ENCODE measurements at regions of chr18 and their contacts with region 1.

Region 1: DNA sequence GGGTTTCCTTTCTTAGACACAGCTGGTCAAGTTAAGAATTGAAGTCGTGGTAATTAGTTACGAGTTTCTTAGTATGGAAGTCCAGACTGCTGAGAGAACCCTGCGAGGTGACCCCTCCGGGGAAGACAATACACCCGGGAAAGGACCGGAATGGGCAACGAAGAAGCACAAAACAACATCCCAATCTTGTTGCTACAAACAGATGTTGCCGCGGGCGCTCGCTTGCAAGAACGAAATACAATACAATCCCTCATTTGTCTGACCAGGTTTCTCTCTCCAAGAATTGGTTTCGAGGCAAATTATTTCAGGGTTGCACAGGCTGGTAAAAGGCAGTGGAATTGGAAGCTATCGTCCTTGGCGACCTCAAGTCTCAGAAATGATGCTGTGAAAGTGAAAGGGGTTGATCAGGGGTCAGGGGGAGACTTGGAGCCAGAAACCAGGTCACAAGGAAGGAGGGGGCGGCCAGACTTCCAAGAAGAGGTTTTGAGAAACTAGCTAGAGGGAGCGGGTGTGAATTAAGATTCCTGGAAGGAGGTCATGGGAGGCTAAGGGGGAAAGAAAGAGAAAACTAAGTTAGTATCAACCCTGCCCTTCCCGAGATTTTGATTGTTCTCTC is 401.9 kb downstream of the HRH4 start:
- DNase-seq: peak; percentile 63
- H3K4me3 ChIP-seq: peak overlapping the region in 1 of 3 experiments; percentile 29
- H3K27ac ChIP-seq: peak overlapping the region; percentile 89
- H3K4me1 ChIP-seq: peaks cover 32% of the 10 kb centered on the region
- H3K27me3 ChIP-seq: no peaks in the 10 kb centered on the region
- CTCF ChIP-seq: no peak
- POLR2A ChIP-seq: no peak

Region 2: GRCh38 chr18:23943104-23943503 is 919.2 kb before region 1 on chr18:
- CTCF ChIA-PET with region 1: no interaction called
- POLR2A ChIA-PET with region 1: no interaction called
- dilution Hi-C with region 1: no loop called
- intact Hi-C with region 1: no loop called
- DNase-seq: no peak
- H3K4me3 ChIP-seq: no peak overlapping the region
- H3K27ac ChIP-seq: no peak overlapping the region
- H3K4me1 ChIP-seq: no peaks in the 10 kb centered on the region
- H3K27me3 ChIP-seq: no peaks in the 10 kb centered on the region
- CTCF ChIP-seq: no peak
- POLR2A ChIP-seq: no peak

Region 3: GRCh38 chr18:24616653-24617052 is 245.7 kb before region 1 on chr18:
- CTCF ChIA-PET with region 1: no interaction called
- POLR2A ChIA-PET with region 1: no interaction called
- dilution Hi-C with region 1: no loop called
- intact Hi-C with region 1: no loop called
- DNase-seq: no peak
- H3K4me3 ChIP-seq: no peak overlapping the region
- H3K27ac ChIP-seq: no peak overlapping the region
- H3K4me1 ChIP-seq: no peaks in the 10 kb centered on the region
- H3K27me3 ChIP-seq: peaks cover 0 to 6% of the 10 kb centered on the region in 2 experiments
- CTCF ChIP-seq: no peak
- POLR2A ChIP-seq: no peak

Region 4: GRCh38 chr18:24726727-24727492 is 135.4 kb before region 1 on chr18:
- CTCF ChIA-PET with region 1: interaction called, 3 read pairs
- POLR2A ChIA-PET with region 1: no interaction called
- dilution Hi-C with region 1: no loop called
- intact Hi-C with region 1: loop called (anchors 5 kb)
- DNase-seq: peak; percentile 77
- H3K4me3 ChIP-seq: peak overlapping the region in 1 of 3 experiments; percentile 10
- H3K27ac ChIP-seq: no peak overlapping the region
- H3K4me1 ChIP-seq: no peaks in the 10 kb centered on the region
- H3K27me3 ChIP-seq: peaks cover 18 to 21% of the 10 kb centered on the region in 2 experiments
- CTCF ChIP-seq: peak; percentile 77 to 87
- POLR2A ChIP-seq: no peak

Region 5: DNA sequence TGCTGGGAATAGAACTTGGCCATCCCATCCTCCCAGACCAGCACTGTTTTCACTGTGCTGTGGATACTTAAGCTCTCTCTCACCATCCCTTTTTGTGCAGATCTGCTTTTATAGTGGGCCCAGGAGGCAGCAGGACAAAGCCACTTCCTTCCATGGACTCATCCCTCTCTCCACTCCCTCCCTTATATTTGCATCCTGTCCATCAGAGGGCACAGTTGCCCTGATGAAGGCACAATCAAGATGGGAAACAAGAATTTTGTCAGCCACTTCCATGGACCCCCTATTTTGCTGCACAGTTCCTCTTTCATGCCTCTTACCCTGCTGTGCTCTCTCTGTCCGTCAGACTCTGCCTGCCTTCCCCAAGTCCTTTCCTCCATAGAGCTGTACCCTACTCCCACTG is 63.1 kb before region 1 on chr18:
- CTCF ChIA-PET with region 1: no interaction called
- POLR2A ChIA-PET with region 1: no interaction called
- dilution Hi-C with region 1: no loop called
- intact Hi-C with region 1: loop called (anchors 5 kb)
- DNase-seq: peak; percentile 20
- H3K4me3 ChIP-seq: no peak overlapping the region
- H3K27ac ChIP-seq: no peak overlapping the region
- H3K4me1 ChIP-seq: no peaks in the 10 kb centered on the region
- H3K27me3 ChIP-seq: peaks cover 3 to 5% of the 10 kb centered on the region in 2 experiments
- CTCF ChIP-seq: peak; percentile 8 to 11
- POLR2A ChIP-seq: no peak

Region 6: GRCh38 chr18:24831871-24832665 is 30.2 kb before region 1 on chr18:
- CTCF ChIA-PET with region 1: interaction called, 5 read pairs
- POLR2A ChIA-PET with region 1: interaction called, 8 read pairs
- dilution Hi-C with region 1: no loop called
- intact Hi-C with region 1: loop called (anchors 1 kb)
- DNase-seq: peak; percentile 98
- H3K4me3 ChIP-seq: no peak overlapping the region
- H3K27ac ChIP-seq: peak overlapping the region; percentile 93
- H3K4me1 ChIP-seq: peaks cover 37% of the 10 kb centered on the region
- H3K27me3 ChIP-seq: peaks cover 0 to 2% of the 10 kb centered on the region in 2 experiments
- CTCF ChIP-seq: no peak
- POLR2A ChIP-seq: peak; percentile 96

Region 7: DNA sequence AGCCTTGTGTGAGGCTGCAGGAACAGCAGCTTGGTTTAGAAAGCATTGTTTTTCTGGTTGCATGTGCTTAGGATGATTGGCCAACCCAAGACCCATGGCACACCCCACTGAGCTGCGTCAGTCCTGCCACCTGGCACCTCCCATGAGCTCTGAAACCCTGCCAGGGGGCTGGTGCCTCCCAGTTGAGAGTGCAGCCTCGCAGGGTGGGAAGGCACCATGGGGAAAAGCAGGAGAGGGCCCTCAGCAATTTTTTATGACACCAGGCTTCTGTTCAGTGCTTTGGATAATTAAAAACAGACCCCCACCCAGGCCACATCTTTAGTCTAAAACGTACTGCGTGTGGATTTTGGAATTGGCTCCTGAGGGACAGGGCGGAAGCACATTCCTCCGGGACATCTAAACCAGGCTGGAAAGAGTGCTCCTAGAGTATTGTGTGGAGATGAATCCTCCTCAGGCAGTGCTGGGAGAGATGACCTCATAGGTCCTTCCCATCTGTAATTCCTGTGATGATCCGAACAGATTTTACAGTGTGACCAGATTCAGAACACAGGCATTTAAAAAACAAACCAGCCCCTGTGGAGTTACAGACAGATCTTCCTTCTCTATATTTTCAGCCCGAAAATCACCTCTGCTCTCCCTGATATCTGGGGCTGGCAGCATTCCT is 51.3 kb after region 1 on chr18:
- CTCF ChIA-PET with region 1: no interaction called
- POLR2A ChIA-PET with region 1: no interaction called
- dilution Hi-C with region 1: no loop called
- intact Hi-C with region 1: loop called (anchors 2 kb)
- DNase-seq: no peak
- H3K4me3 ChIP-seq: no peak overlapping the region
- H3K27ac ChIP-seq: peak overlapping the region; percentile 65
- H3K4me1 ChIP-seq: peaks cover 33% of the 10 kb centered on the region
- H3K27me3 ChIP-seq: no peaks in the 10 kb centered on the region
- CTCF ChIP-seq: no peak
- POLR2A ChIP-seq: no peak